ENCODE measurements at regions of chr20 and their contacts with region 1.

Region 1: GRCh38 chr20:362271-363254 is 15.7 kb downstream of the NRSN2 start:
- DNase-seq: peak; percentile 99
- H3K4me3 Mint-ChIP-seq: peak overlapping the region; percentile 64
- H3K27ac Mint-ChIP-seq: peak overlapping the region; percentile 67
- H3K4me1 Mint-ChIP-seq: peaks cover 60% of the 10 kb centered on the region
- H3K27me3 Mint-ChIP-seq: no peaks in the 10 kb centered on the region
- CTCF ChIP-seq: peak; percentile 73

Region 2: DNA sequence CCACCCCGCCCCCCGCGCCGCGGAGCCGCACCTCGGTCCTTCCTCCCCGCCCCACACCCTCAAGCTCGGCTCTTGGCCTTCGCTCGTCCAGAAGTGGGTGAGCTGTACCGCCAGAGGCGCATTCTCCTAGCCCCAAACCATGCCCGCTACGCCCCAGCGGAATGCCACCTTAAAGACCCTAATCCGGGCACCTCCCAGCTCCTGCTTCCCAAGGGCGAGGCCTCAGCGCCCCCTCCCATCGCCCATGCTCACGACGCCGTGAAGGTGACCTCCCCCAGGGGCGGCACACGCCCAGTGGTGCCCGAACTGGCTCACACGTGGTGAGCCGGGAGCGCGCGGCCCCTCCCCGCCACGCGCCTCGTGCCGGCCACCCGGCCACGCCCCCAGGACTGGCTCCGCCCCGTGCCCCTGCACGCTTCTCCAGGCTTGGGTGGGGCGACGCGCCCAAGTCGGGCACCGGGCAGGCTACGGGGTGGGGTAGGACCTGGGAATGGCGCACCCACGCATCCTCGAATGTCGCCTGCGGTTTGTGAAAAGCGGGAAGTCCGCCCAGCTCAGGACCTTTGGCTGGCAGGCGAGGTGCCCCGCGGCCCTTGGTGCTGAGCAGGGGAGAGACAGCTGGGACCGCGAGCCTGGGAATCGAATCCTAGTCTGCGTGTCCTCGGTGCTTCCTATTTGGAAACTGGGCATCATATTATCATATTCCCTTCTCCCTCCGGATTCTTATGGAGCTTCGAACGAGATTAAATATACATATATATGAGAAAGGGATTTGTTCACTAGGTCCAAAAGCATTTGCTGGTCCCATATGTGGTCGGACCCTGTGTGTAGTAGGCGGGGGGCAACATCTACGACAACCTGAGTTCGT is 38.2 kb before region 1 on chr20:
- CTCF ChIA-PET with region 1: interaction called, 7 read pairs
- POLR2A ChIA-PET with region 1: interaction called, 56 read pairs
- intact Hi-C with region 1: no loop called
- DNase-seq: peak; percentile 91
- H3K4me3 Mint-ChIP-seq: peak overlapping the region; percentile 87
- H3K27ac Mint-ChIP-seq: peak overlapping the region; percentile 88
- H3K4me1 Mint-ChIP-seq: peaks cover 11% of the 10 kb centered on the region
- H3K27me3 Mint-ChIP-seq: no peaks in the 10 kb centered on the region
- CTCF ChIP-seq: peak; percentile 25

Region 3: DNA sequence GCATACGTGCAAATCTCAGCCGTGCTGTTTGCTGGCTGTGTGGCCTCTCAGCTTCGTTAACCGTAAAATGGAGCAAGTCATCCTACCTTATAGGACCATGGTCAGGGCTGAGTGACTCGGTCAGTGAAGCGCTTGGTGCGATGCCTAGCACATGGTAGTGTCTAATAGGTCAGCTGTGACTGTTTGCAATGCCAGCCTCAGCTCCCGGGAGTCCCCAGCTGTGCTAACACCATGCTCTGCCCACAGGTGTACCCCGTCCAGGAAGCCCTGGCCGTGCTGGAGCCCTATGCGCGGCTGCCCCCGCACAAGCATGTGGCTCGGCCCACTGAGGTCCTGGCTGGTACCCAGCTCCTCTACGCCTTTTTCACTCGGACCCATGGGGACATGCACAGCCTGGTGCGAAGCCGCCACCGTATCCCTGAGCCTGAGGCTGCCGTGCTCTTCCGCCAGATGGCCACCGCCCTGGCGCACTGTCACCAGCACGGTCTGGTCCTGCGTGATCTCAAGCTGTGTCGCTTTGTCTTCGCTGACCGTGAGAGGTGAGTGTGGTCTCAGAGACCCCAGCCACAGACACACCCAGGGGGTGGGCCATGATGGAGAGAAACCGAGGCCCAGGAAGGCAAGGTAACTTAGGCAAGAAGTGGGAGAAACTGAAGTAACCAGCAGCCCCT is 28.6 kb after region 1 on chr20:
- CTCF ChIA-PET with region 1: interaction called, 16 read pairs
- POLR2A ChIA-PET with region 1: interaction called, 671 read pairs
- intact Hi-C with region 1: no loop called
- DNase-seq: no peak
- H3K4me3 Mint-ChIP-seq: no peak overlapping the region
- H3K27ac Mint-ChIP-seq: no peak overlapping the region
- H3K4me1 Mint-ChIP-seq: peaks cover 7% of the 10 kb centered on the region
- H3K27me3 Mint-ChIP-seq: no peaks in the 10 kb centered on the region
- CTCF ChIP-seq: no peak

Region 4: GRCh38 chr20:407133-407952 is 44.8 kb after region 1 on chr20:
- CTCF ChIA-PET with region 1: interaction called, 45 read pairs
- POLR2A ChIA-PET with region 1: interaction called, 197 read pairs
- intact Hi-C with region 1: no loop called
- DNase-seq: peak; percentile 76
- H3K4me3 Mint-ChIP-seq: peak overlapping the region; percentile 82
- H3K27ac Mint-ChIP-seq: peak overlapping the region; percentile 30
- H3K4me1 Mint-ChIP-seq: peaks cover 31% of the 10 kb centered on the region
- H3K27me3 Mint-ChIP-seq: no peaks in the 10 kb centered on the region
- CTCF ChIP-seq: peak; percentile 19

Region 5: DNA sequence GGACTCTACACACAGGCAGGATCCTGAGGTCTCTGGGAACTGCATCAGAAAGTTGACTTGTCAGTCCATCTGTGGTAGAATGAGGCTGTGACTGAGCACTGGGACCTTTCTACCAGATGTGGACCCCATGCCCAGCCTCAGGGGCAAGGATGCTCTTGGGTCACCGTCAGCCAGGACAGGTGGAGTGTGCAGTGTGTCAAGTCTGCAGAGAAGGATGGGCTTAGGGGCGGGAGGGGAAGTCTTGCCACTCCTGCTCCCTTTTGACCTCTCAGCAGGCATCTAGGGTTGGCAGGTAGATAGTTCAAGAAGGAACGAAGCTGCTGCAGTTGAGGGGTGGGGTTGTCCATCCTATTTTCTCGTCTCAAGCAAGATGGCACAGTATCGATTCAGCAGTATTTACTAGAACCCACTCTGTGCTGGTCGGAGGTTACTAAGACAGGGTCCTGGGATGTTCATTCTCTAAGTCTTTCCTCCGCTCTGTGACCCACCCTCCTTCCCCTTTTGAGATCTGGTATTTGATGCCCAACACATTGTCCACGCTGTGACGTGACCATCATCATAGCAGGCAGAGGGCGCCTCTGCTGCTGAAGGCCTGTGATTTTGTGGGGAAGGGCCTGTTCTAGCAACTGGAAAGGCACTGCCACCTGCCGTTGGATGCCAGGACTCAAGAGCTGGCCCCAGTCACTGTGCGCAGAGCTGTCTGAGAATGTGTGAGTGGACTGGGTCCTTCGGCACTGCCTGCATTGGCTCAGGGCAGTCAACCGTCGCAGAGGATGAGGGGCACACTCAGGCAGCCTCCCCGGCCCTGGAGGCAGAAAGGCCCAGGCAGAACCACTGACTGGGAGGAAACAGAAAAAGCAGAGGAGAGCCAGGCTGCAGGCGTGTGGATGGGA is 68.7 kb after region 1 on chr20:
- CTCF ChIA-PET with region 1: interaction called, 118 read pairs
- POLR2A ChIA-PET with region 1: interaction called, 20 read pairs
- intact Hi-C with region 1: loop called (anchors 2 kb)
- DNase-seq: peak; percentile 77
- H3K4me3 Mint-ChIP-seq: no peak overlapping the region
- H3K27ac Mint-ChIP-seq: no peak overlapping the region
- H3K4me1 Mint-ChIP-seq: peaks cover 7% of the 10 kb centered on the region
- H3K27me3 Mint-ChIP-seq: no peaks in the 10 kb centered on the region
- CTCF ChIP-seq: peak; percentile 67

Region 6: DNA sequence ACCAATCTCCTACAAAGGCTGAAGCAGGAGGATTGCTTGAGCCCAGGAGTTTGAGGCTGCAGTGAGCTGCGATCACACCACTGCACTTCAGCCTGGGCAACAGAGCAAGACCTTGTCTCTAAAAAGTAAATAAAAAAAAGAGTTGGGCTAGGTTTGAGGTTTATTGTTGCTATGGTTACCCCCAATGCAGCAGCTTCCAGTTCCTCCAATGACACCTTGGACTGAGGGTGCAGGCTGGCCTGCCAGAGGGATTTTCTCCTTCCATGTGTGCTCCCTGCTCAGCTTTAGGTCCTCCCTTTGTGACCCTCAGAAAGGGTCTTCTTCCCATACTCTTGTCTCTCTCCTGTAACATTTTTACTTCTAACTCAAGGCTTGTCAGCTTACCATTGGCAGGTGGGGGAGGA is 110.3 kb after region 1 on chr20:
- CTCF ChIA-PET with region 1: interaction called, 45 read pairs
- POLR2A ChIA-PET with region 1: interaction called, 10 read pairs
- intact Hi-C with region 1: no loop called
- DNase-seq: no peak
- H3K4me3 Mint-ChIP-seq: no peak overlapping the region
- H3K27ac Mint-ChIP-seq: no peak overlapping the region
- H3K4me1 Mint-ChIP-seq: no peaks in the 10 kb centered on the region
- H3K27me3 Mint-ChIP-seq: peaks cover 21% of the 10 kb centered on the region
- CTCF ChIP-seq: no peak

Region 7: DNA sequence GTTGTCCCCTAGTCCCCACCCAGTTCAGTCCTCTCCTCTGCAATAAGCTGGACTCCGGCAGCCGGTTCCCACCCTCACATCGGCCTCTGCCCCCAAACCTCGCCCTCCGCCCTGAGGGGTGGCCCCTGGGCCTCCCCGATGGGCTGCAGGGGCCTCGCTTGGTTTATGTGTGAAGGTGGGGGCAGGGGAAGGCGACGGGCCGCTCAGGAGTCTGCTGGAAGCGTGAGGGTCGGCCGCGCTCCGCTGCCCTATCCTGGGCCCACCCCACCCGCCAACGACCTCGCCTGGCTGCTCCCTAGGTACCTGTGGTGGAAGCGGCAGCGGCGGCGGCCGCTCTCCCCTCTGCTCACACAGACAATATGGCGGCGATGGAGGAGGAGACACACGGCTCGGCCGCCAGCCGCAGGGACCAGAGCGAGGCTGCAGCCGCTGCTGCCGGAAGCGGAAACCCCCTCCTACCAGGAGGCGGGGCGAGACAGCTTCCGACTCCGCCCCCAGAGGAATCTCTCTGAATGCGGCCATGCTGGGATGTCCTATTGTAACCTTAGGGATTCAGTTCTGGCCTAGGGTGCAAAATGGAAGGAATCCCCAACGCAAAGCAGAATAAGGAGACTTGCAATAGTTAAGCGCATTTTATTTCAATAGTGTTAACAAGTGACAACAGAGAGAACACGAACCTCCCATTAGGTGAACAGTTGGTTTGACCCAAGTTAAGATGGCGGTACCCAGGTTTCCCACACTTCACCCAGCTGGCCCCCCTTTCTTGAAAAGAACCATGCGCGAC is 181.0 kb after region 1 on chr20 and contains the start of gene CSNK2A1:
- CTCF ChIA-PET with region 1: no interaction called
- POLR2A ChIA-PET with region 1: interaction called, 10 read pairs
- intact Hi-C with region 1: no loop called
- DNase-seq: peak; percentile 94
- H3K4me3 Mint-ChIP-seq: peak within 1 kb of the TSS; percentile 77
- H3K27ac Mint-ChIP-seq: peak within 1 kb of the TSS; percentile 99
- H3K4me1 Mint-ChIP-seq: peaks cover 27% of the 10 kb centered on the region
- H3K27me3 Mint-ChIP-seq: no peaks in the 10 kb centered on the region
- CTCF ChIP-seq: no peak
- total RNA-seq, gene CSNK2A1: 271 and 297 TPM in 2 replicates

Region 8: GRCh38 chr20:951384-952169 is 589.0 kb after region 1 on chr20:
- CTCF ChIA-PET with region 1: no interaction called
- POLR2A ChIA-PET with region 1: no interaction called
- intact Hi-C with region 1: no loop called
- DNase-seq: no peak
- H3K4me3 Mint-ChIP-seq: no peak overlapping the region
- H3K27ac Mint-ChIP-seq: no peak overlapping the region
- H3K4me1 Mint-ChIP-seq: no peaks in the 10 kb centered on the region
- H3K27me3 Mint-ChIP-seq: peaks cover 58% of the 10 kb centered on the region
- CTCF ChIP-seq: no peak

Measured in MCF 10A (cell line).